HepG2 (cell line): ENCODE measurements at regions of chr6 and their contacts with region 1.

Region 1: DNA sequence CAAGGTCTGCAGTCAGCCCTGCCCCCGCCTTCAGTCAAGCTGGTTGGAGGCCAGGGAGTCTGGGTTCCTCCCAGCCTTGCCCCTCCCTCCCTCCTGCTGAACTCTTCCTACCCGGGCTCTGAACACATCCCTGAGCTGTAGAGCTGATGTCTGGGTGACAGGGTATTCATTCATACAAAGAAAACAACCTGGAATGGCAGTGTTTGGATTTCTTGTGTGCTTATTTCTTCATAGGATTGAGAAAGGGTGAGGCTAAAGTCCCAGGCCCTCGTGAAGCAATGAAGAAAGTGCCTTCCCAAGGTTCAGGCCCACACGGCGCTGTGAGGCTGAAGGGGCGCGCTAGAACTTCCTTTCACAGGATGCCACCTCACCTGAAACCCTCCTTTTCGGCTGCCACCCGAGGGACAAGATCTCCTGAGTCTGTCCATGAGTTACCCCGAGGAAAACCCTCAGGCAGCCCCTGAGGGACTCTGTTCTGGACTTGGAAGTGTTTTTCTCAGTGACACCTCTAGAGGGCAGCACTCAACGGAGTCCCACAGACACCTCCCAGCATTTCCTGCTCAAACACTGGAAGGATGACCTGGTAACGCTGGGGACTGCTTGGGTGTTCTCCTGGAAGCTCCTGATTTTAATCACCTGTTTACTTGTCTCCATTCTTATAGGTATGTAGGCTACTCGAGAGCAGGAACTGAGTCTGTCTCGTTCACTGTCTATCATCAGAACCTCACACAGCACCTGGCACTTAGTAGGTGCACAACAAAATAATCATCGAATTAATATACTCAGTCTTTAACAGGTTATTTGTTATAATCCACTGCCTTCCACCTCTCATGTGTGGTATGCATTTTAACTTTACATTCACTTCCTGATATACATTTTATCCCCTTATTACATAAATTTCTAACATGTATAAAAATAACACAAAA is 11.8 kb upstream of the GSTA1 start:
- DNase-seq: peak; percentile 91
- ATAC-seq: peak; percentile 92
- H3K4me3 ChIP-seq: peak overlapping the region; percentile 34 to 69 (median 41); a peak in 4 of 6 replicates
- H3K27ac ChIP-seq: peak overlapping the region; percentile 89
- H3K4me1 ChIP-seq: peaks cover 34% of the 10 kb centered on the region
- H3K27me3 ChIP-seq: no peaks in the 10 kb centered on the region
- CTCF ChIP-seq: peak; percentile 88
- EP300 ChIP-seq: peak in 1 of 2 experiments; percentile 90; a peak in 3 of 4 replicates
- POLR2A ChIP-seq: peak in 1 of 2 experiments; percentile 69; a peak in 2 of 4 replicates
- RAD21 ChIP-seq: peak; percentile 78

Region 2: GRCh38 chr6:52904562-52905279 is 89.3 kb after region 1 on chr6:
- CTCF ChIA-PET with region 1: no interaction called
- POLR2A ChIA-PET with region 1: no interaction called
- in situ Hi-C with region 1: no loop called
- intact Hi-C with region 1: no loop called
- DNase-seq: peak; percentile 34
- ATAC-seq: peak; percentile 97
- H3K4me3 ChIP-seq: no peak overlapping the region
- H3K27ac ChIP-seq: no peak overlapping the region
- H3K4me1 ChIP-seq: peaks cover 6% of the 10 kb centered on the region; the same call in 1 of the 2 replicates
- H3K27me3 ChIP-seq: peaks cover 0 to 2% of the 10 kb centered on the region in 2 experiments; a peak in 2 of 5 replicates
- CTCF ChIP-seq: peak; percentile 63
- EP300 ChIP-seq: no peak
- POLR2A ChIP-seq: no peak
- RAD21 ChIP-seq: peak; percentile 60

Region 3: DNA sequence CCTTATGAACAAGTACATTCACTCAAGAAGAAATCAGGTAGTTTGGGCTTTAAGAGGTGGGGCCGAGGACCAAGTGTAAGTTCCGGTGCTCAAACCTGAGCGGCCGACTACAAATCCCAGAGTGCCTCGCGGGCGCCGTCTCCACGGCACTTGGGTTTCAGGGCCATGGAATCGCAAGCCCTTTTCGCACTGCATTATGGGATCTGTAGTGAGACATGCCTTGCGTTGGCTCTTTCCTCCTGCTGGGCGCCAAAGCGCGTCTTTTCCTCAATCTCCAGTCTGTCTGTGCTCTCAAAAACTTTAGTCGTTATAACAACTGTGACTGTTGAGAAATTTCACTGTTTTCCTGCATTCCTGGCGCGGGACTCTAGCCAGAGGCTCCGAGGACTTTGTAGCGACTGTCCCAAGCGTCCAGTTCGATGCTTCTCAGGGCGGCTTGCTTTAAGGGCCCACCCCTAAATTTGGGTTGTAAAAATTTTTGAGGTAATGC is 249.3 kb after region 1 on chr6:
- CTCF ChIA-PET with region 1: no interaction called
- POLR2A ChIA-PET with region 1: no interaction called
- in situ Hi-C with region 1: no loop called
- intact Hi-C with region 1: loop called (anchors 1 kb)
- DNase-seq: peak; percentile 98
- ATAC-seq: peak; percentile 74
- H3K4me3 ChIP-seq: peak overlapping the region; percentile 71 to 99 (median 92)
- H3K27ac ChIP-seq: peak overlapping the region; percentile 81
- H3K4me1 ChIP-seq: peaks cover 44% of the 10 kb centered on the region
- H3K27me3 ChIP-seq: no peaks in the 10 kb centered on the region; a peak in 1 of 5 replicates
- CTCF ChIP-seq: no peak; the same call in 1 of the 2 replicates
- EP300 ChIP-seq: 0 out of 4 replicates have a peak, but pooled peaks of 1 of the 2 experiments have one; percentile 11
- POLR2A ChIP-seq: peak in 1 of 2 experiments; percentile 39; a peak in 1 of 4 replicates
- RAD21 ChIP-seq: no peak

Region 4: DNA sequence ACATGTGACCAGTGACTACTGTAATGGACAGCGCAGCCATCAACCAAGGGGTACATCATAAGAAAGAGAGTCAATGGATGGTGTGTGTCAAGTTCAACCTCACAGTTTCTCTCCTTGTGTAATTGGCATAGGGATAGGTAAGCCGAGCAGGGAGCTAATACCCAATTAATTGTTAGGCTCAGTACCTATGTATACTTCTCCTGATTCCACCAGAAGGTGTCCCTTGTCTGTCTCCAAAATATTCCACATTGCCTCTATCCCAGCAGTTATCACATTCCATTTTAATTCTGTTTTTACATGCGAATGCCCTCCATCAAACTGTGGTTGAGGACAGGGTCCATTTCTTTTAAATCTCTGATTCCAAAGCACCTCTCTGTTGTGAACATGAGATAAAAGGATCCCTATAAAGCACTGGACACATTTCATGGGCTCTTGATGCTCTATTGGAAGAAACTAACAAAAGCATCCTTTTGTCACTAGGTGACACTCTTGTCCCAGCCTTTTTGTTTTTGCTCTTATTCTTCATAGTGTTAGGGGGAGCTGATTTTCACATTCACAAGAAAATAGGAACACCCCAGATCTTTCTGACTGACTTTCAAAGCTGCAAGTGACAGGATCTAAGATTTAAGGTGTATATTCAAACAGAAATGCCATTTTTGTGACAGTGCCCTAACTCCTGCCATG is 288.7 kb after region 1 on chr6:
- CTCF ChIA-PET with region 1: no interaction called
- POLR2A ChIA-PET with region 1: no interaction called
- in situ Hi-C with region 1: no loop called
- intact Hi-C with region 1: no loop called
- DNase-seq: peak; percentile 74
- ATAC-seq: peak; percentile 83
- H3K4me3 ChIP-seq: no peak overlapping the region
- H3K27ac ChIP-seq: no peak overlapping the region
- H3K4me1 ChIP-seq: peaks cover 10% of the 10 kb centered on the region; the same call in 1 of the 2 replicates
- H3K27me3 ChIP-seq: no peaks in the 10 kb centered on the region
- CTCF ChIP-seq: peak; percentile 71
- EP300 ChIP-seq: no peak
- POLR2A ChIP-seq: no peak
- RAD21 ChIP-seq: peak; percentile 36; the same call in 1 of the 2 replicates

Region 5: DNA sequence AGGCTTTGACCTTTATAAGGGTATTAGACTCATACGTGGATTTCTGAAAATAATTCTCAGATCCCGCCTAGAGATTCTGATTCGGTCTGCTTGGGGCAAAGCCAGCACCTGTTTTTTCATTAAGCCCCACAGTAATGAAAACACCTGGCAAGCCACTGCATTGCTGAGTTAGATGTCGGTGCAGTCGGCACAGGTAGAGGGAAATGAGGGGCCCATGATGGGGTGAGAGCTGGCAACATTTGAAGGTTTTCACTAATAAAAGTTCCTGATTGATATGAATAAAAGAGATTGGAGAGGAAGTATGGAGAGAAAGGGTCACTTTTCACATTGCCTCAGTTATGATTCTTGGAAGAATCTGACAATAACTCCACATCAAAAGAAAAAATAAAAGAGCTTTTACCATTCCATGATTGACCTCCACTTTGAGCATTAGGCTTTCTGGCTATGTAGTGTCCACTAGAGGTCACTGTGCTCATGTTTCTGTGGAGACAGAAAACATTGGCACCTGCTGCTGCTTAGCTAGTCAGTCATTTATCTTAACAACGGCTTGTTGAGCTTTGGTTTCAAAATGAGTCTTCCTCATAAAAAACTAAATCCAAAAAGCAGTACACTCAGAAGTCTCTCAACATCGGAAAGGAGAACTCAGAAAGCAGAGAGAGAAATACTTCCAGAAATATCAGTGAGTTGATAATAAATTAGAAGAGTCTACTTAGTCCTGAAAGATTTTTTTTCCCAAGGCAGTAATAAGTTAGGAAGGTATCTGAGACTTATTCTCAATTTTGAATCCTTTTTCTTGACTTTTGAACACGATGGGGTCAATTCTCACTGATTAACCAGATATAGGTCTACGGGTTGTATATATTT is 903.4 kb after region 1 on chr6:
- CTCF ChIA-PET with region 1: no interaction called
- POLR2A ChIA-PET with region 1: no interaction called
- in situ Hi-C with region 1: no loop called
- intact Hi-C with region 1: no loop called
- DNase-seq: peak; percentile 72
- ATAC-seq: peak; percentile 89
- H3K4me3 ChIP-seq: no peak overlapping the region
- H3K27ac ChIP-seq: no peak overlapping the region
- H3K4me1 ChIP-seq: peaks cover 22% of the 10 kb centered on the region
- H3K27me3 ChIP-seq: no peaks in the 10 kb centered on the region; a peak in 1 of 5 replicates
- CTCF ChIP-seq: peak; percentile 88
- EP300 ChIP-seq: no peak
- POLR2A ChIP-seq: no peak
- RAD21 ChIP-seq: no peak